WTC11 (cell line): ENCODE measurements at regions of chr12 and their contacts with region 1.

Region 1: DNA sequence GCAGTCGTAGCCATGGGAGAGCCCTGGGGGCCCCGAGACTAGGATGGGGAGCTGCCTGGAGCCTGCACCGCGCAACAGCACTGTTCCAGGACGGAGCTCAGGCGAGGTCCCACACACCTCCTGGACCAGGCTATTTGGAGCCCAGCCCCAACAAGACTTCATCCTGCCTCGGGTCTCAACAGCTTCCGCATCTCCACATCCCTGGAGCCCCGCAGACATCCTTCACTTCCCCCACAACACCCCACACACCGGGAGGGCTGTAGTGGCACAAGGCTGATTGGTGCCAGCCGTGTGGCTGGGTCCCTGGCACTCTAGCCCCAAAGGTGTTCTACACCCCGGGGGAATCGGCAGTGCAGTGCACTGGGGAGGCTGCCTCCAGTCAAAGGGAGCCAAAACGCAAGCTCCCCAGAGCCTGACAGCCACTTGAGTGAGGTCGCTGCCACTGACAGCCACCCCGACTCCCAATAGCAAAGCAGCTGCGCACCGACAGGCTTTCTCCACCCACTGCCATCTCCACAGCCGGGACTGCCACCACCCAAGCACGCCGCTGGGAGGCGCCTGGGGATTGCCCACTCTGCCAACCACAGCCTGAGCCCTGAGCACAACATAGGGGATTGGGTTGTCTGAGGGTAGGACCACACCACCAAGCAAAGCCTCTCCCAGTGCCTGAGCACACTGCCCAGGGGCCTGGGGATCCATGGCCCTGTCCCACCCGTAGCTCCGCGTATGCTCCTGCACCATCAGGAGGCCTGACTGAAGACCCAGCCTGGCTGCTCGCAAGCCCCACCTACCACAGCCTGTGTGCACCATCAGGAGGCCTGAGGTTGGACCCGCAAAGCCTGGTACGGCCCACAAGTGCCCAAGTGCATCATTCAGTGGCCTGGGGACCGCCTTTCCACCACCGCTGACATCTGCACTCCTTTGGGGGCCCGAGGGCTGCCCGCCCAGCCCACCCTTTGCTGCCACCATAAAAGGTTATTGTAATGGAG is 13.2 kb upstream of the KLRF1 start:
- DNase-seq: peak; percentile 90
- ATAC-seq: peak; percentile 97
- H3K4me3 Mint-ChIP-seq: peak overlapping the region; percentile 53
- H3K27ac Mint-ChIP-seq: no peak overlapping the region
- H3K4me1 Mint-ChIP-seq: peaks cover 10% of the 10 kb centered on the region
- H3K27me3 Mint-ChIP-seq: peaks cover 7% of the 10 kb centered on the region
- CTCF ChIP-seq: peak; percentile 81

Region 2: DNA sequence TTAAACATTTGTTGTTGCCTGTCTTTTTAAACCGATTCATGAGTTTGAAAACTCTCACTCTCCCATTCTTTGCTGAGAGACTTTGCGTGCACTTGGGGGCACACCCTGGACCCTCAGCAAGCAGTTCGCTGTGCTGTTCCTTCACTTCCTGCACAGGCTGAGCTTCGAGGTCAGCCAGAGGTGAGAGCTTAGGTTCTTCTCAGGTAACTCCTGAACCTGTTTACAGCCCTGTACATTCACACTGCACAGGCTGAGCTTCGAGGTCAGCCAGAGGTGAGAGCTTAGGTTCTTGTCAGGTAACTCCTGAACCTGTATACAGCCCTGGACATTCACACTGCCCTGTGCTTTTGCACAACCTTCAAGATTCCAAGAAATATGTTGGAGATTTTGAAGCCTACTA is 71.5 kb before region 1 on chr12:
- CTCF ChIA-PET with region 1: interaction called, 11 read pairs
- POLR2A ChIA-PET with region 1: no interaction called
- DNase-seq: no peak
- ATAC-seq: no peak
- H3K4me3 Mint-ChIP-seq: no peak overlapping the region
- H3K27ac Mint-ChIP-seq: no peak overlapping the region
- H3K4me1 Mint-ChIP-seq: peaks cover 21% of the 10 kb centered on the region
- H3K27me3 Mint-ChIP-seq: peaks cover 12% of the 10 kb centered on the region
- CTCF ChIP-seq: no peak

Region 3: DNA sequence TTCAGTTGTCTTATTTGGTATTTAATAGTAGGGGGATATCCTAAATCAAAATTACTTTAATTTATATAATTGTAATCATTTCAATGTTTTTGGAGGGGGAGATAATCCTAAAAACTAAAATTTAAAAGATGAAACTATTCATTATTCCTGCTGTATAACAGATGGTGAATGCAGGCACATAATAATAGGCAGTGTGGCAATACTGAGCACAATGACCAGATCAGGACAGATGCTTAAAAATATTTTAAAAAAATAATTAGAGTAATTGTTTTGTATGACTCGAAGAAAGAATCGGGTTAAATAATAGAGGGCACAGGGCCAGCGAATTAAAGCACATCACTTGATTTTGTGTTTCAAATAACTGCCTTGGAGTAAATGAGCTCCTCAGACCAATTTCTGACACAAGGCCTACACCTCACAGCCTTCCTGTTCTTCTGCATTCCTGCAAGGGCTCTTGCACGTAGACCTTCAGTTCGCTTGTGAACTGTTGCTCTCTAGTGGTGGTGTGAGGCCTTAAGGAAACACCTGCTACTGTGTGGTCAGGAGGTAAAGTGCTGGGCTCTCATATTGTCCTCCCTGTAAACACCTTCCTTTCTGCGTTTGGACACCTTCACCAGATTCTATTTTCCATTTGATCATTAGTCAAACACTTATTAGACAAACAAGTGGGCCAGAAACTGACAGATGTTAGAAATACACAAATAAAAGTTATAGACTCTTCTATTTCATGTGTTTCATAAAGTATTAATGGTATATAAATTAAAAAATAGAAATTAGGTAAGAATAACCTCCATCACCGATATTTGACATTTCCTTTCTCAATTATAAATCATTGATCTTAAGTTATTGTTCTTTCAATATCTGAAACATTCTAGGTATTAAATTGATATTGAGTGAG is 16.1 kb before region 1 on chr12:
- CTCF ChIA-PET with region 1: interaction called, 28 read pairs
- POLR2A ChIA-PET with region 1: no interaction called
- DNase-seq: peak; percentile 63
- ATAC-seq: peak; percentile 100
- H3K4me3 Mint-ChIP-seq: no peak overlapping the region
- H3K27ac Mint-ChIP-seq: no peak overlapping the region
- H3K4me1 Mint-ChIP-seq: peaks cover 26% of the 10 kb centered on the region
- H3K27me3 Mint-ChIP-seq: no peaks in the 10 kb centered on the region; the same call in 1 of the 2 replicates
- CTCF ChIP-seq: no peak

Region 4: GRCh38 chr12:9925708-9926393 is 111.7 kb after region 1 on chr12:
- CTCF ChIA-PET with region 1: interaction called, 16 read pairs
- POLR2A ChIA-PET with region 1: no interaction called
- DNase-seq: peak; percentile 25
- ATAC-seq: peak; percentile 97
- H3K4me3 Mint-ChIP-seq: no peak overlapping the region
- H3K27ac Mint-ChIP-seq: no peak overlapping the region
- H3K4me1 Mint-ChIP-seq: peaks cover 2% of the 10 kb centered on the region; the same call in 1 of the 2 replicates
- H3K27me3 Mint-ChIP-seq: no peaks in the 10 kb centered on the region
- CTCF ChIP-seq: no peak

Region 5: GRCh38 chr12:10140001-10140400 is 325.9 kb after region 1 on chr12:
- CTCF ChIA-PET with region 1: interaction called, 13 read pairs
- POLR2A ChIA-PET with region 1: no interaction called
- DNase-seq: peak; percentile 42
- ATAC-seq: peak; percentile 50; the same call in 1 of the 2 replicates
- H3K4me3 Mint-ChIP-seq: no peak overlapping the region
- H3K27ac Mint-ChIP-seq: no peak overlapping the region
- H3K4me1 Mint-ChIP-seq: peaks cover 5% of the 10 kb centered on the region
- H3K27me3 Mint-ChIP-seq: no peaks in the 10 kb centered on the region
- CTCF ChIP-seq: peak; percentile 37; the same call in 1 of the 2 replicates